OCI-LY7 (cell line): ENCODE measurements at regions of chr9 and their contacts with region 1.

Region 1: DNA sequence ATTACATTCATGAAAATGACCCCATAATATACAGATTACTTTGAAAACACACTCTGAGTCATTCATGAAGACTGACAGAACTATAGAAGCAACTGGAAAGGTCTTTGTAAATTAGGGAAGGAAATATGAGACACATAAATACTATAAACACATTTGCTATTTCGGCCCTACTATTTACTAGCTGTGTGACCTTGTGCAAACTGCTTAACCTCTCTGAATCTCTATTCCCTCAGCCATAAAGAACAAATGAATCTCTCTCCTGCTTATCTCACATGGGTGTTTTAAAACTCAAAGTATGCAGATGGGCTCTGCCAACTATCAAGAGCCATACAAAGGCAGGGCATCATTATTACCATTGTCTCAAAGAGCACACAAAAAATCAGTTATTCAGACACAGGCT is 52.9 kb downstream of the APBA1 start:
- DNase-seq: no peak
- H3K4me3 ChIP-seq: no peak overlapping the region
- H3K27ac ChIP-seq: no peak overlapping the region
- H3K4me1 ChIP-seq: no peaks in the 10 kb centered on the region
- CTCF ChIP-seq: no peak

Region 2: GRCh38 chr9:69519470-69520240 is 99.6 kb before region 1 on chr9:
- CTCF ChIA-PET with region 1: no interaction called
- POLR2A ChIA-PET with region 1: no interaction called
- intact Hi-C with region 1: no loop called
- DNase-seq: no peak
- H3K4me3 ChIP-seq: no peak overlapping the region
- H3K27ac ChIP-seq: no peak overlapping the region
- H3K4me1 ChIP-seq: no peaks in the 10 kb centered on the region
- CTCF ChIP-seq: no peak

Region 3: DNA sequence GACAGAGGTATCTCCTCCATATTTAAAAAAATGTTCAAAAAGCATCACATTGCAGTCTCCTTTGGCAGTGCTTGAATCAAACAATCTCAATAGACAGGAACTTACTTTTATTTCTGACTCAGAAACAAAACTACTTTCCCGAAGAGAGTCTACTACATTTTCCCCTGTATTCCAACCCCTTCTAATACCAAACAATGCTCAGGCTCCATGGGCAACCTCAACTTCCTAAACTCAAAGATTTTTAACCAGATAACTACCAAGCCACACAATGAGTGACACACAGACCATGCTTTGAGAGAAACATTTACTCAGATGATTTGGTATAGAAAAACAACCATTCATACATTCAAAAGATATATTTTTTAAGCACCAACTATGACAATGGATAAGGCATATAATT is 17.5 kb before region 1 on chr9:
- CTCF ChIA-PET with region 1: no interaction called
- POLR2A ChIA-PET with region 1: interaction called, 5 read pairs
- intact Hi-C with region 1: loop called (anchors 1 kb)
- DNase-seq: no peak
- H3K4me3 ChIP-seq: no peak overlapping the region
- H3K27ac ChIP-seq: no peak overlapping the region
- H3K4me1 ChIP-seq: no peaks in the 10 kb centered on the region
- CTCF ChIP-seq: no peak

Region 4: GRCh38 chr9:70076678-70077077 is 457.4 kb after region 1 on chr9:
- CTCF ChIA-PET with region 1: no interaction called
- POLR2A ChIA-PET with region 1: no interaction called
- intact Hi-C with region 1: no loop called
- DNase-seq: no peak
- H3K4me3 ChIP-seq: no peak overlapping the region
- H3K27ac ChIP-seq: no peak overlapping the region
- H3K4me1 ChIP-seq: no peaks in the 10 kb centered on the region
- CTCF ChIP-seq: no peak

Region 5: GRCh38 chr9:70510157-70510770 is 891.0 kb after region 1 on chr9:
- CTCF ChIA-PET with region 1: no interaction called
- POLR2A ChIA-PET with region 1: no interaction called
- intact Hi-C with region 1: no loop called
- DNase-seq: peak; percentile 27
- H3K4me3 ChIP-seq: no peak overlapping the region
- H3K27ac ChIP-seq: no peak overlapping the region
- H3K4me1 ChIP-seq: no peaks in the 10 kb centered on the region
- CTCF ChIP-seq: peak; percentile 75